ENCODE measurements at regions of chr18 and their contacts with region 1.

Region 1: GRCh38 chr18:11407940-11408339 is 201.5 kb upstream of the SLC35G4 start:
- ATAC-seq: peak in 4 of 8 experiments; percentile 21 to 94 (median 46)
- H3K4me3 ChIP-seq: no peak overlapping the region
- H3K27ac ChIP-seq: no peak overlapping the region
- H3K4me1 ChIP-seq: no peaks in the 10 kb centered on the region

Region 2: DNA sequence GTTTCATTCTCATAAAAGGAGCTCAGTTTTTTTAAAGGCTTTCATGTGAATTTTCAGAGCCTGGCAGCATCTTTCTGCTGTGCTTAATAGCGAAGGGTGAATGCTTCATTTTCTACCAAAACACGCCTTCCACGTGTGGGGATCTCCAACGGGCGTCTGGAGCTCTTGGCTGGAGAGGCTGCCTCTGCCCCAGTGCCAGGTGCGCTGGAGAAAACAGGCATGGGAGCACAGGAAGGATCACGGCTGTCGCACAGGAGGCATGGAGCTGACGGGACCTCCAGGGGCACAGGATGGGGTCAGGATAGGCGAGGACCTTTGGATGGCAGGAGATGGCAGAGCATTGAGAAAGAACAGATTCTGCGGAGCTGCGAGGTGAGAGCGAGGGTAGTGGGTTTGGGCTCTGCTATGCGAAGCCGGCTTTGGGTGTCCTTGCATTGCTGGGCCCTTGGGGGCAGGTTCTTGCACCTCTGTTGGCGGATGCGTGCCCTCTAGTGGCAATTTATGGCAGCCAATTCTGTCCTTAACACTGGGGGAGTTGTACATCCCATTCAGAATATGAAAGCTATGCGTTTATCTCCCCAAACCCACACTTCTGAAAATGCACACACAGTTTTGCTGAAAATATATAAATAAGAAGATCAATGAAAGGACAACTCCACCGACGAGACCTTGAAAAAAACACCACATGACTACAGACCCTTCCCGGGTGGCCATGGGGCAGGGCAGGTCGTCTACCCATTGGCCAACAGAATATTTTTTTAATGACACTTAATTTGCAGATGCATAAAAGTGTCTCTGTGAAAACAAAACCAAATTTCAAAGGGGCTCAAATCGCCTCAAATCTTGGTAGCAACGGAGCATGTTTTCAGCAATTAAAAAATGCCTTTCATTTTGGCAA is 111.1 kb after region 1 on chr18:
- in situ Hi-C with region 1: loop called in 1 of 9 experiments (anchors 25 kb)
- ATAC-seq: peak in 1 of 8 experiments; percentile 70
- H3K4me3 ChIP-seq: no peak overlapping the region
- H3K27ac ChIP-seq: no peak overlapping the region
- H3K4me1 ChIP-seq: peaks cover 0 to 5% of the 10 kb centered on the region in 2 donors

Region 3: GRCh38 chr18:11695736-11696135 is 287.8 kb after region 1 on chr18:
- in situ Hi-C with region 1: no loop called
- ATAC-seq: no peak
- H3K4me3 ChIP-seq: no peak overlapping the region
- H3K27ac ChIP-seq: no peak overlapping the region
- H3K4me1 ChIP-seq: no peaks in the 10 kb centered on the region

Measured in motor neuron (in vitro differentiated cells).